ENCODE measurements at regions of chr17 and their contacts with region 1.

Region 1: DNA sequence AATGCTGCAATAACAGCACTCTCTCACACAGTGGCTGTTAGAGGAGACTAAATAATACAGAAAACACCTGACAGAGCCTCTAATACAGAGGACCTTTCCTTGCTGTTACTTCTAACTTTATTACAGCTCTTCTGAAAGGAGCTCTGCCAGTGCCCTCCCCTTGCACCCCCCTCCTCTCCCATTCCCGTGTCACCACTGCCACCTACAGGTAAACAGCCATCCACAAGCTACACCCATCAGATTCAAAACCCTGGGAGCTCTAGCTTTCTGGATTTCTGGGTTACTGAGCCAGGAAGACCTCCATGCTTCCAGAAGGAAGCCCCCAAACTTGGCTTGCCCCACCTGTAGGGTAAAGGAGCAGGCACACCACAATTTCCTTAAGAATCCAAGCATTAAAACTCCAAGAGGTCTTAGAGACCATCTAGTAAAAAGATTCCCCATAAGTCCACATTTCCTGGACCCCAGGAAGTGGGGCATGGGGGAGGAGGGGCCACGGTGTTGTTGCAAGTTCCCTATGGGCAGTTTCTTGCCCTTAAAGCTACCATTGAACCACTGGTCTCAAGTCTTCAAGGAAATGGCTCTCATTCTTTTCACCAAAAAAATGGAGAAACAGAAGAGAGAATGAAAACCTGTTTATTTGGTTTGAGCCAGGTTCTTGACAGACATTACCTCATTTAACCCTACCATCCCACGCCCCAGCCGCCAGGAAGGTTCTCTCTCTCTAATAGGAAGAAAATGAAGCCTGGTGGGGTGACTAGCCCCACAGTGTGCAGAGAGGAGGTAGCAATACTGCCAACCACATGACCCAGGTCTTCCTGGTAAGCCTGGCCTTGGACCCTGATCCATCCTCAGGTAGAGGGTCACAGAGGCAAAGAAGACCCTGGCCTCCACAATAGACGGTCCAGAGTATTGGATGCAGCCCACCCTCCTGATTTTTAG is 52.8 kb downstream of the TOM1L2 start:
- DNase-seq: peak; percentile 85
- H3K4me3 ChIP-seq: no peak overlapping the region
- H3K27ac ChIP-seq: peak overlapping the region; percentile 44 to 53; a peak in 3 of 4 replicates
- H3K4me1 ChIP-seq: peaks cover 19 to 39% of the 10 kb centered on the region in 2 experiments
- H3K27me3 ChIP-seq: no peaks in the 10 kb centered on the region
- CTCF ChIP-seq: peak; percentile 87
- EP300 ChIP-seq: no peak
- RAD21 ChIP-seq: peak; percentile 98

Region 2: DNA sequence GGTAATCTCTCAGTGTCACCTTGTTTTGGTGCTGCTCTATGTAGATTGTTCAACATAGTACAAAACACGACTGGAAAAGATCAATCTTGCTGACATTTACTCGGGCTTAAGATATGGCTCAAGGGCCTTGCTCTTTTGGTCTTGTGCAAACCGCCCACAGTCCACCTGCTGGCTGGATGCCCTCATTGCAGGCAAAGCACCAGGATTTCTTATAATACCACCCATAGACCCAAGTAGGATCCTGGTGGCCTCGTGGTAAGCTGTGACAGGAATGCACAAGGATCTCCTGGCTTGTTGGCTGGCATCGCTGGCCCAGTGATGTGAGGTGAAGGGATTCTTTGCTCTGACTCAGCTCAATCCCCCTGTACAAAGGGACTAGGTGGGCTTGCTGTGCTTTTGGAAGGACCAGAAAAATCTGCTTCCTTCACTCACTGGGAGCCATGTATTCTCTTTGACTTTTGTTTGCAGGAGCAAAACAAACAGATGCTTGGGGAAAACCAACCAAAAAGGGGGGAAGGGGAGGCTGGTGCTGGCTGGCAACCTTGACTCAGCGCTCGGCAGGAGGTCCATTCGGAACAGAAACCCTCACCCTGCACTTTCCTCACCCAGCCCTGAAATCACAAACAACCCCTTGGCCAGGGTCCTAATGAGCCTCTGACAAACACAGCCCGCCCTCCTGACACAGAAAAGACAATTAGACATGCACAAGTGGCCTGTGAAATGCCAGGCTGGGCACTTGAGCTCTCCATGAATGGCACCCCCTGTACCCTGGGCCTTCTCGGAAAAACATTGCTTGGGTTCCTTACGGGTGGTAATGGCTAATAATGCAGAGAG is 479.2 kb before region 1 on chr17:
- CTCF ChIA-PET with region 1: no interaction called
- POLR2A ChIA-PET with region 1: no interaction called
- DNase-seq: peak; percentile 72
- H3K4me3 ChIP-seq: no peak overlapping the region
- H3K27ac ChIP-seq: no peak overlapping the region
- H3K4me1 ChIP-seq: peaks cover 0 to 6% of the 10 kb centered on the region in 2 experiments; a peak in 2 of 4 replicates
- H3K27me3 ChIP-seq: no peaks in the 10 kb centered on the region
- CTCF ChIP-seq: peak; percentile 63
- EP300 ChIP-seq: no peak
- RAD21 ChIP-seq: peak; percentile 51

Region 3: GRCh38 chr17:17681187-17681848 is 238.1 kb before region 1 on chr17 and contains the start of gene RAI1:
- CTCF ChIA-PET with region 1: interaction called, 21 read pairs
- POLR2A ChIA-PET with region 1: no interaction called
- DNase-seq: peak; percentile 95
- H3K4me3 ChIP-seq: peak within 1 kb of the TSS; percentile 81 to 85
- H3K27ac ChIP-seq: peak within 1 kb of the TSS; percentile 94 to 96
- H3K4me1 ChIP-seq: peaks cover 23 to 29% of the 10 kb centered on the region in 2 experiments
- H3K27me3 ChIP-seq: no peaks in the 10 kb centered on the region
- CTCF ChIP-seq: peak; percentile 59
- EP300 ChIP-seq: no peak
- RAD21 ChIP-seq: peak; percentile 75
- polyA plus RNA-seq, gene RAI1: 2.6 and 4.7 TPM in 2 replicates

Region 4: GRCh38 chr17:17836250-17836817 is 83.1 kb before region 1 on chr17:
- CTCF ChIA-PET with region 1: interaction called, 10 read pairs
- POLR2A ChIA-PET with region 1: interaction called, 5 read pairs
- DNase-seq: peak; percentile 96
- H3K4me3 ChIP-seq: peak overlapping the region; percentile 75 to 79
- H3K27ac ChIP-seq: peak overlapping the region; percentile 69 to 95
- H3K4me1 ChIP-seq: peaks cover 22 to 63% of the 10 kb centered on the region in 2 experiments; a peak in 3 of 4 replicates
- H3K27me3 ChIP-seq: no peaks in the 10 kb centered on the region
- CTCF ChIP-seq: no peak
- EP300 ChIP-seq: no peak; a peak in 1 of 4 replicates
- RAD21 ChIP-seq: peak; percentile 11

Region 5: DNA sequence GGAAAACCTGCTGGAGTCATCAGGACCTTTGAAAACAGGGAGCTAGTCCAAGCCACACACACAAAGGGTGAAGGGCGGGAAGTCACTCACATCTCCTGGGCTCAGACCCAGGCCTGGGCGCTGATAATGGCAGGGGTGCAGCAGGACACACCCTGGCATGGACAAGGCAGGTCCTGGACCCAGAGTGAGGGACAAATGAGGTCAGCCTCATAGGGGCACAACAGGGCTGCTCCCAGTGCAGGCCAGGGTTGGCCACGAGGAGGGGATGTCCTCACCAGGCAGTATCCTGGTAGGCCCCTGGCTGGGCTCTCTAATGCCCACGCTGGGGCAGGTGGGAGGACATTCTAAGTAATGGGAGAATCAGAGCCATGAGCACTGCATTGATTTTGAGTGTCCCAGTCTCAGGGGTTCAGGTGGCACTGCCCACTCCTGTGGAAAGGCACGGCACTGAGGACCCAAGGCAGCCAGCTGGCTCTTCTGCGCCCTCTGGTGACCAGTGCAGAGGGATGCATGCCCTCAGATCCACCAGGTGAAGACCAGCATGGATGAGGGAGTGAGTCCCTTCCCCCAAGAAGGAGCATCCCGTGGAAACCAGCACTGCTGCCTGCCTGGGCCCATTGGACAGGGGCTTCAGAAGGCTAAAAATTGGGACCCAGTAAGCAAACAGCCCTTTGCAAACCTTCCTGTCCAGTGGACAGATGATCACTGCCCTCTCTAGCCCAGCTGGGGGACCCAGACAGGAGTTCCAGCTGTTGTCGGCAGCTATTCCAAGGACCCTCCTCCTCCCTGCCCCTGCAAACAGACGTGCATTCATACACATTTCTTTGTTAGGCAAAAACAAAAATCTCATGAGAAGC is 59.3 kb before region 1 on chr17:
- CTCF ChIA-PET with region 1: interaction called, 45 read pairs
- POLR2A ChIA-PET with region 1: no interaction called
- DNase-seq: peak; percentile 84
- H3K4me3 ChIP-seq: no peak overlapping the region; a peak in 1 of 4 replicates
- H3K27ac ChIP-seq: no peak overlapping the region; a peak in 1 of 4 replicates
- H3K4me1 ChIP-seq: peaks cover 0 to 47% of the 10 kb centered on the region in 2 experiments; a peak in 1 of 4 replicates
- H3K27me3 ChIP-seq: no peaks in the 10 kb centered on the region
- CTCF ChIP-seq: peak; percentile 92
- EP300 ChIP-seq: no peak
- RAD21 ChIP-seq: peak; percentile 95

Region 6: DNA sequence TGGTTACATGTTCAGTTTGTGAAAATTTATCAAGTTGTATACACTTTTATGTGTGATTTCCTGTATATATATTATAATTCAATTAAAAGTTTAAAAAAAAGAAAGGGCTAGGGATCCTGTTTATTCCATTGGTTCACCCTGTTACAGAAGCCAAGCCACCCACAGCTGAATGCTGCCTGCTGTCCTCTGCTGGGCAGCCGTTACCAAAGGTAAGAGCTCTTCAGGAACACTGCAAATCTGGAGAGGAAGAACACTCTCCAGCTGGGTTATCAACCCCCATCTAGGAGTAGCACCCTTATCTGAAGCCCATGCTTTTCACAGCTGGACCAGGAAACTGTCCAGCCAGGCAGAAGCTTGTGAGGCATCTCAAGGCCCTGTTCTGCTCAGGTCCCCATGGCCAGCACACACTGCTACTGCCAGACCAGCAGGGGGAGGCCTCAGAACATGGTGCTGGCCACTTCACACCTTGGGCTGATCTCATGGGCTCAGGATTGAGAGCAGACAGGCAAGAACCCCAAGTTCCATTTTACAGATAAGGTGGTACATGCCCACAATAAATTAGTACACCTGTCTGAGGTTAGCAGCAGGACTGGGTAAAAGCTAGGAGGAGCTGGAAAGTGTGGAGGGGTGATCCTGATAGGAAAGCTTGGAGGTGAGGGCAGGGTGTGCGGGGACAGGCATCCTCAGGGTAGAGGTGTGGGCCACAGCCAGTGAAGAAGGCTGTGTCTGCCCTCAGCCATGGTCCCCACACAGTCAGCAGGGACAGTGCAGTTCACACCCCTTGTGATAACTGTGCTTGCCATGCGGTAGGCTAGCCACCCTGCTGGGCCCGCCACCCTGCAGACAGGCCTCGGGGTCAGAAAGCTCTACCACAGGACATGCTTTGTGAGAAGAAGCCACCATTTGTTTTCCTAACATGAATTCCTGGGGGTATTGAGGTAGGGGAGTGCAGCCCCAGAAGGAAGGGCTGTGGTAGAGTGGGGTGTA is 28.4 kb before region 1 on chr17:
- CTCF ChIA-PET with region 1: interaction called, 158 read pairs
- POLR2A ChIA-PET with region 1: interaction called, 4 read pairs
- DNase-seq: peak; percentile 71
- H3K4me3 ChIP-seq: no peak overlapping the region
- H3K27ac ChIP-seq: peak overlapping the region in 1 of 2 experiments; percentile 43; a peak in 1 of 4 replicates
- H3K4me1 ChIP-seq: peaks cover 0 to 31% of the 10 kb centered on the region in 2 experiments; a peak in 1 of 4 replicates
- H3K27me3 ChIP-seq: no peaks in the 10 kb centered on the region
- CTCF ChIP-seq: peak; percentile 79
- EP300 ChIP-seq: no peak
- RAD21 ChIP-seq: peak; percentile 94

Region 7: GRCh38 chr17:17935321-17936271 is 16.2 kb after region 1 on chr17:
- CTCF ChIA-PET with region 1: interaction called, 35 read pairs
- POLR2A ChIA-PET with region 1: no interaction called
- DNase-seq: no peak
- H3K4me3 ChIP-seq: no peak overlapping the region
- H3K27ac ChIP-seq: peak overlapping the region; percentile 56 to 79
- H3K4me1 ChIP-seq: peaks cover 49 to 74% of the 10 kb centered on the region in 2 experiments
- H3K27me3 ChIP-seq: no peaks in the 10 kb centered on the region
- CTCF ChIP-seq: no peak
- EP300 ChIP-seq: peak; percentile 57 to 80
- RAD21 ChIP-seq: no peak

Region 8: GRCh38 chr17:18033442-18034099 is 114.1 kb after region 1 on chr17:
- CTCF ChIA-PET with region 1: interaction called, 26 read pairs
- POLR2A ChIA-PET with region 1: no interaction called
- DNase-seq: peak; percentile 80
- H3K4me3 ChIP-seq: no peak overlapping the region; a peak in 1 of 4 replicates
- H3K27ac ChIP-seq: no peak overlapping the region; a peak in 1 of 4 replicates
- H3K4me1 ChIP-seq: peaks cover 0 to 14% of the 10 kb centered on the region in 2 experiments; a peak in 2 of 4 replicates
- H3K27me3 ChIP-seq: no peaks in the 10 kb centered on the region
- CTCF ChIP-seq: peak; percentile 77
- EP300 ChIP-seq: no peak
- RAD21 ChIP-seq: peak; percentile 99